ENCODE measurements at regions of chr9 and their contacts with region 1.

Region 1: GRCh38 chr9:1794547-1795270 is 220.4 kb upstream of the SMARCA2 start:
- DNase-seq: no peak
- H3K4me3 ChIP-seq: no peak overlapping the region
- H3K27ac ChIP-seq: no peak overlapping the region
- H3K4me1 ChIP-seq: no peaks in the 10 kb centered on the region
- H3K27me3 ChIP-seq: peaks cover 3% of the 10 kb centered on the region
- CTCF ChIP-seq: no peak

Region 2: GRCh38 chr9:1759009-1759408 is 35.7 kb before region 1 on chr9:
- CTCF ChIA-PET with region 1: no interaction called
- POLR2A ChIA-PET with region 1: no interaction called
- intact Hi-C with region 1: loop called (anchors 5 kb)
- DNase-seq: no peak
- H3K4me3 ChIP-seq: no peak overlapping the region
- H3K27ac ChIP-seq: no peak overlapping the region
- H3K4me1 ChIP-seq: no peaks in the 10 kb centered on the region
- H3K27me3 ChIP-seq: no peaks in the 10 kb centered on the region
- CTCF ChIP-seq: no peak